ENCODE measurements at regions of chr12 and their contacts with region 1.

Region 1: GRCh38 chr12:56510786-56511185 is 10.8 kb upstream of the RBMS2 start:
- DNase-seq: no peak
- H3K4me3 Mint-ChIP-seq: no peak overlapping the region
- H3K27ac Mint-ChIP-seq: no peak overlapping the region
- H3K4me1 Mint-ChIP-seq: no peaks in the 10 kb centered on the region
- H3K27me3 Mint-ChIP-seq: peaks cover 20% of the 10 kb centered on the region
- CTCF ChIP-seq: no peak

Region 2: DNA sequence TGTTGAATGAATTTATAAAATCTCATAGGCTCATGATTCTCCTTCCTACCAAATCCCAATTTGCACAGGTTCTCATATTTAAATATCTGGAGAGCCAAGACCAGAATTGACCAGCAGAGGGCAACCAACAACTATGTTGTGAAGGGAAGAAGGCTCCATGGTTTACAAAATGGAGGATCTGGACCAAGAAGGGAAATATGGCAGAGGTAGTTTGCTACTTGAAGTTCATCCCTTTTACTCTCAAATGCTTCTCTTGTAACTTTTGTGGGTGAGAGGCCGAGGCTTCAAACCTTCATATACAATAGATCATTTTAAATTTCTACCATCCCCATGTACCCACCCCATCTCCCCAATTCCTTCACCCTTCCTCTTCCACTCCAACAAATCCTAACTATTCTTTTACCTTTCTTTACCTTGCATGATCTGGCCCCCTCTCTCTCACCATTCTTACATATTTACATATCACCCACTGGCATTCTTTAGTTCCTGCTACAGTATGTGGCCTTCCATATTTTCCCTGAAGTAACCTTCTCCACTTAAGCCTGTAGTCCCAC is 317.7 kb before region 1 on chr12:
- CTCF ChIA-PET with region 1: no interaction called
- POLR2A ChIA-PET with region 1: no interaction called
- intact Hi-C with region 1: no loop called
- DNase-seq: peak; percentile 87
- H3K4me3 Mint-ChIP-seq: no peak overlapping the region
- H3K27ac Mint-ChIP-seq: peak overlapping the region; percentile 18
- H3K4me1 Mint-ChIP-seq: peaks cover 32% of the 10 kb centered on the region
- H3K27me3 Mint-ChIP-seq: no peaks in the 10 kb centered on the region
- CTCF ChIP-seq: peak; percentile 67

Region 3: DNA sequence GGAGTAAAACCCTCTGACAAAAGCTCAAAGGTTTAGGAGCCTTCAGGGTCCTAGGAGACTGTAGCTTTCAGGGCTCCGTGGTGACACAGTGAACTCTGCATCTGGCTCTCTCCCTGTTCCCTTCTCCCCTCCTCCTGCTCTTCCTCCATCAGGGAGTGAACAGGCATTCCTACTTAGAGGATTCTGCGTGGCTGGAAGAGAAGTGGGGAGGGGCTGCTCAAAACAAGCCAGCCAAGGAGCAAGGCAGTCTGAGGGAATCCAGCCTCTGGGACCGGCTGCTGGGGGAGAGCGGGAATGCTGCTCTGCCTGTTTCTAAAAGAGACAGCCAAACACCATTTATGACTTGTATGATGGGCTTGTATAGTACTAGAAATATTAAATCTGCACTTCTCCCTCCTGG is 60.3 kb after region 1 on chr12:
- CTCF ChIA-PET with region 1: interaction called, 112 read pairs
- POLR2A ChIA-PET with region 1: interaction called, 21 read pairs
- intact Hi-C with region 1: loop called (anchors 1 kb)
- DNase-seq: no peak
- H3K4me3 Mint-ChIP-seq: no peak overlapping the region
- H3K27ac Mint-ChIP-seq: no peak overlapping the region
- H3K4me1 Mint-ChIP-seq: peaks cover 22% of the 10 kb centered on the region
- H3K27me3 Mint-ChIP-seq: no peaks in the 10 kb centered on the region
- CTCF ChIP-seq: no peak

Region 4: DNA sequence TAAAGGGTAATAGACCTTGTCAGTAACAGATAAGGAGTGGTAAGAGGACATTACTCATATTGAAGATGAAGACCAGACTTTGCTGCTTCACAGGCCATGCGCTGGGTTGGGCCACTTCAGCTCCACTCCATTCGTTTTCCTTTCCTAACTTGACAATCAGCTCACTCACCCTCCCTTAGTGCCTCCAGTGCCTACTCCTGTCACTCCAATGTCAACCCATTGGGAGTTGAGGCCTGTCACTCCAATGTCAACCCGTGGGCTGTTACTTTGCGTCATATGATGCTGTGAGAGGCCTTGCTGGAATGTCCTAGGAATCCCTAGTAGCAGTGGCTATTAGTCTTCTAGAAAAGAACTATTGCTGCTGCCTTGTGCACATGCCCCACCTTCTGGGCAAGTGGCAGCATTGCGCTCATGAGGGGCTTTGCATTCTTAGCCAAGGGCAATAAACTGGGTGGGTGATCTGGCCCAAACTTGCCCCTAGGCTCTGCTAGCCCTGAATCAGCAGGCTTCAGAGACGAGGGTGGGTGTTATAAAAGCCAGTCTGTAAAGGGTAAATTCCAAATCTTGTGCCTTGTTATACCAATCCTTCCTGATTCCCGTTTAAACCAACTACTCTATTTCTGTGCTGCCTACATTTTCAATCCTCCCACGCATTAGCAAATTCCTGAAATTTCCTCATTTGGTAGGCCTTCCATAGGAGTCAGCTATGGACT is 83.3 kb after region 1 on chr12:
- CTCF ChIA-PET with region 1: interaction called, 90 read pairs
- POLR2A ChIA-PET with region 1: interaction called, 3 read pairs
- intact Hi-C with region 1: loop called (anchors 1 kb)
- DNase-seq: peak; percentile 62
- H3K4me3 Mint-ChIP-seq: no peak overlapping the region
- H3K27ac Mint-ChIP-seq: peak overlapping the region; percentile 77
- H3K4me1 Mint-ChIP-seq: peaks cover 10% of the 10 kb centered on the region
- H3K27me3 Mint-ChIP-seq: no peaks in the 10 kb centered on the region
- CTCF ChIP-seq: peak; percentile 82

Measured in MCF 10A (cell line).